Activated T-helper 1 cell treated with anti-CD3 and anti-CD28 coated beads, Interleukin-12 subunit alpha, Interleukin-12 subunit beta, Interleukin-2, Interleukin-4 antibody, amounts not matched to agents 30 ng/mL and 10 ng/mL and 1 ng/mL, durations not matched to agents 14 hours and 24 hours and 36 hours (primary cell): ENCODE measurements at regions of chrX and their contacts with region 1.

Region 1: DNA sequence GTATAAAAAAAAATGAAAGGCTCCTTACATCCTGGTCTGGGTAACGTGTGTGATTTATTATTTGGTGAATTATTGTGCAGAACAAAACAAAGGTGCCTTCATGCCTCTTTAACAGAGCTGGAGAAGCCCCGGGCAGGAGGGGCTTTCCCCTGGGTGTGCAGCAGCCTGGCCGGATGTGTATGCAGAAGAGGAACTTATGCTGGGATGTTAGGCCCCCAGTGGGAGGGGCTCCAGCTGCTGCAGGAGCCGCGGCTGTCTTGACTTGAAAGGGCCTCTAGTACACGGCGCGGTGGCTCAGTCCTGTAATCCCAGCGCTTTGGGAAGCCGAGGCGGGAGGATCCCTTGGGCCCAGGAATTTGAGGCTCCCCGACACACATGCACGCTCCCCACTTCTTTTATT is 16.0 kb downstream of the CCNQ start:
- DNase-seq: peak; percentile 59
- H3K4me3 Mint-ChIP-seq: peak overlapping the region; percentile 54
- H3K27ac Mint-ChIP-seq: no peak overlapping the region
- H3K4me1 Mint-ChIP-seq: peaks cover 17% of the 10 kb centered on the region
- H3K27me3 Mint-ChIP-seq: no peaks in the 10 kb centered on the region

Region 2: GRCh38 chrX:153599192-153600031 is 16.5 kb after region 1 on chrX:
- intact Hi-C with region 1: loop called (anchors 1 kb)
- DNase-seq: peak; percentile 87
- H3K4me3 Mint-ChIP-seq: peak overlapping the region; percentile 89
- H3K27ac Mint-ChIP-seq: peak overlapping the region; percentile 59
- H3K4me1 Mint-ChIP-seq: peaks cover 30% of the 10 kb centered on the region
- H3K27me3 Mint-ChIP-seq: peaks cover 1% of the 10 kb centered on the region

Region 3: GRCh38 chrX:153627675-153628111 is 44.8 kb after region 1 on chrX:
- intact Hi-C with region 1: no loop called
- DNase-seq: no peak
- H3K4me3 Mint-ChIP-seq: no peak overlapping the region
- H3K27ac Mint-ChIP-seq: no peak overlapping the region
- H3K4me1 Mint-ChIP-seq: no peaks in the 10 kb centered on the region
- H3K27me3 Mint-ChIP-seq: peaks cover 6% of the 10 kb centered on the region

Region 4: DNA sequence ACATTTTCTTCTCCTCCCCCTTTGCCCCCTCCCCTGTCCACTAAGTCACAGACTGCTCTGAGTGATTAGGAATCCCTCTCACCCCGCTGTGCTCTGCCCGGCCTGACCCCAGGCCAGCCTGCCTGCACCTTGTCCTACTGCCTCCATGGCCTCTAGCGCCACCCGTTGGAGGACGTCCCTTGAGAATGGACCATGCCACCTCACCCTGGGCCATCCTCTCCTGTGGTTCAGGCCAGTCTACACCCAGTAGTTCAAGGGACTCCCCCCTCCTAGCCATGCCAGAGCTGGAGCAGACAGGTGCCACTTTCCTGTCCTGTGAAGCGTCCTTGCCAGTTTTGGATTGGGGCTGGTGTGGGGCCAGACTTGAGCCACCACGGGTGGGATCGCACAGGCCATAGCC is 446.5 kb after region 1 on chrX:
- intact Hi-C with region 1: no loop called
- DNase-seq: no peak
- H3K4me3 Mint-ChIP-seq: no peak overlapping the region
- H3K27ac Mint-ChIP-seq: no peak overlapping the region
- H3K4me1 Mint-ChIP-seq: no peaks in the 10 kb centered on the region
- H3K27me3 Mint-ChIP-seq: no peaks in the 10 kb centered on the region